Ascending aorta (tissue), 2 donors: ENCODE measurements at regions of chr17 and their contacts with region 1.

Region 1: GRCh38 chr17:49575579-49576087 is at the start of gene NXPH3:
- DNase-seq: peak in 1 of 2 donors; percentile 81
- H3K4me3 ChIP-seq: peak within 1 kb of the TSS; percentile 84 to 89
- H3K27ac ChIP-seq: peak within 1 kb of the TSS; percentile 93 to 95
- H3K4me1 ChIP-seq: peaks cover 18 to 47% of the 10 kb centered on the region in 2 donors
- H3K27me3 ChIP-seq: no peaks in the 10 kb centered on the region
- CTCF ChIP-seq: peak; percentile 16 to 95 (median 35)
- total RNA-seq, gene NXPH3: 30.3 TPM

Region 2: DNA sequence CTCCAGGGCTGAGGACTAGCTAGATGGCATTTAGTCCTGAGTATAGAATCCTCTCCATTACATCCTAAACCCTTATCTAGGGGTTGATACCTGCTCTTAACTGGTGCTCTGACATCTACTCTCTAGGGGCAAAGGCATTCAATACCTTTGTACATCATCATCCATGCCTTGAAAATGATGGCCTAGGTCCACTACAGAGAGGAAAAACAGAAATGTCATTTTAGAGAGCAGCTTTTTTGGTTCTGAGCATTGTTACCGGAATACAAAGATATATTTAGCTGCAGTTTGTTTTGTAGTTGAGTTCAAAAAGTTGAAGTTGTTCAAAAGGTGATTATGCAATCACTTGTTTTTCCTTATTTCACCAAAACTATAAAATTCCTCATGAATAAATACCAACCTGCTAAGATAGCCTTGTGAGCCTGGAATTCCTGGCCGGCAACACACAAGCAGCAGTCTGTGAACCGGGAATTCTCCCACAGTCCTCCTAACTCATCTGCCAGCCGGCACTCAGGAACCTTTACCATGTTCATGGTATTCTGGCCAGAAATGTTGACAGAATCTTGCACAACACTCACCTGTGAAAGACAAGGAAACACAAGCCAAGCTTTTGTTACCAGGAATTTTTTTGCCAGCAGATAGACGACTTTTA is 35.4 kb after region 1 on chr17:
- intact Hi-C with region 1: loop called (anchors 5 kb)
- DNase-seq: no peak
- H3K4me3 ChIP-seq: no peak overlapping the region
- H3K27ac ChIP-seq: peak overlapping the region; percentile 73 to 76
- H3K4me1 ChIP-seq: peaks cover 9 to 30% of the 10 kb centered on the region in 2 donors
- H3K27me3 ChIP-seq: no peaks in the 10 kb centered on the region
- CTCF ChIP-seq: no peak

Region 3: DNA sequence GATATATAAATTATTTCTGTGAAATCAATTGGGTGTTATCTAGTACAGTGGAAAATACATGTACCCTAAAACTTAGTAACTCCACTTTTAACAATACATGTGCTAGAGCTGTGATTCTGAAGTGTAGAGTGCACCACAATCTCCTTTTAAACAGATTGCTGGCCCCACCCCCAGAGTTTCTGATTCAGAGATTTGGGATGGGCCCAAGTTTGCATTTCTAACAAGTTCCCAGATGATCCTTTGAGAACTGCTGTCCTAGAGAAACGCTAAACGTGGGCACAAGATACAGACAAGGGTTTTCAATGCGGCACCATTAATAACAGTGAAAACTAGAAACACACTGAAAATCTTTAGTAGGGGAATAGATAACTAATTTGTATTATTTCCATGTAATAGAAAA is 49.3 kb after region 1 on chr17:
- intact Hi-C with region 1: loop called (anchors 5 kb)
- DNase-seq: peak in 1 of 2 donors; percentile 78
- H3K4me3 ChIP-seq: no peak overlapping the region
- H3K27ac ChIP-seq: peak overlapping the region; percentile 28 to 74
- H3K4me1 ChIP-seq: peaks cover 5 to 78% of the 10 kb centered on the region in 2 donors
- H3K27me3 ChIP-seq: no peaks in the 10 kb centered on the region
- CTCF ChIP-seq: no peak

Region 4: GRCh38 chr17:49748791-49749190 is 173.2 kb after region 1 on chr17:
- intact Hi-C with region 1: no loop called
- DNase-seq: no peak
- H3K4me3 ChIP-seq: no peak overlapping the region
- H3K27ac ChIP-seq: no peak overlapping the region
- H3K4me1 ChIP-seq: no peaks in the 10 kb centered on the region
- H3K27me3 ChIP-seq: no peaks in the 10 kb centered on the region
- CTCF ChIP-seq: no peak

Region 5: GRCh38 chr17:49836111-49837030 is 260.7 kb after region 1 on chr17:
- intact Hi-C with region 1: loop called (anchors 5 kb)
- DNase-seq: peak in 1 of 2 donors; percentile 89
- H3K4me3 ChIP-seq: no peak overlapping the region
- H3K27ac ChIP-seq: peak overlapping the region; percentile 79 to 82
- H3K4me1 ChIP-seq: peaks cover 5 to 28% of the 10 kb centered on the region in 2 donors
- H3K27me3 ChIP-seq: no peaks in the 10 kb centered on the region
- CTCF ChIP-seq: no peak